ENCODE measurements at regions of chr2 and their contacts with region 1.

Region 1: GRCh38 chr2:103151046-103151445 is 389.2 kb downstream of the TMEM182 start:
- DNase-seq: no peak
- H3K4me3 ChIP-seq: no peak overlapping the region
- H3K27ac ChIP-seq: no peak overlapping the region
- H3K4me1 ChIP-seq: no peaks in the 10 kb centered on the region
- H3K27me3 ChIP-seq: no peaks in the 10 kb centered on the region
- CTCF ChIP-seq: no peak
- EP300 ChIP-seq: no peak
- POLR2A ChIP-seq: no peak
- RAD21 ChIP-seq: no peak

Region 2: DNA sequence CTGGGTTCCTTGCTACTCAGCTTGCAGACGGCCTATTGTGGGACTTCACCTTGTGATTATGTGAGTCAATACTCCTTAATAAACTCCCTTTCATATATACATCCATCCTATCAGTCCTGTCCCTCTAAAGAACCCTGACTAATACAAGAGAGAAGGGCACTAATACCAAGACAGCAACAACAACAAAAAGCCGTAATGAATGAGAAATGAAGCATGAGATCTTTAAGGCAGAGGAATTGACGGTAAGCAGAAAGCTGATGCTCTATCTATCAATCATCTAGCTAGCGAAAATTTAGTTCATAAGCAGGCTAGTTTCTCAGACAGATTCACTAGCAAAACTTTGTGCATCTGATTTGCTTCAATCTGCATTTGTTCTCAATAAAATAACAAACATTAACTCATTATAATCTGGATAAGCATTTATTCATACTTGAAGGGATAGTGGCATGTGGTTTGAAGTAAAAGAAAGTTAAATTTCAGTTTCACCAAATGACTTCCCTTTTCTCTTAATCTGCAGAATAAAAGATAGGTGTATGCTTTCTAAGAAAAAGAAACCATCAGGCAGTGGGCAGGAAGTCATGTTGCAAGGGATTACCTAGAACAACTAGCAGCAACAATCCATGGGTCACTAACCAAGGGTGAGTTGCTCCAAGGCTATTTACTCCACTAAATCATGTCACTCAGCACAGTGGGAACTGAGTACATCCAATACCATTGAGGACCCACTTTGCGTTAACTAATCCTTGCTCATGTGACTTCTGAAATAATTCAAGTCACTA is 12.7 kb before region 1 on chr2:
- CTCF ChIA-PET with region 1: no interaction called
- POLR2A ChIA-PET with region 1: no interaction called
- DNase-seq: no peak
- H3K4me3 ChIP-seq: no peak overlapping the region
- H3K27ac ChIP-seq: no peak overlapping the region
- H3K4me1 ChIP-seq: peaks cover 0 to 4% (median under 1%) of the 10 kb centered on the region in 4 experiments; a peak in 2 of 7 replicates
- H3K27me3 ChIP-seq: no peaks in the 10 kb centered on the region
- CTCF ChIP-seq: no peak
- EP300 ChIP-seq: no peak
- POLR2A ChIP-seq: no peak
- RAD21 ChIP-seq: no peak

Region 3: DNA sequence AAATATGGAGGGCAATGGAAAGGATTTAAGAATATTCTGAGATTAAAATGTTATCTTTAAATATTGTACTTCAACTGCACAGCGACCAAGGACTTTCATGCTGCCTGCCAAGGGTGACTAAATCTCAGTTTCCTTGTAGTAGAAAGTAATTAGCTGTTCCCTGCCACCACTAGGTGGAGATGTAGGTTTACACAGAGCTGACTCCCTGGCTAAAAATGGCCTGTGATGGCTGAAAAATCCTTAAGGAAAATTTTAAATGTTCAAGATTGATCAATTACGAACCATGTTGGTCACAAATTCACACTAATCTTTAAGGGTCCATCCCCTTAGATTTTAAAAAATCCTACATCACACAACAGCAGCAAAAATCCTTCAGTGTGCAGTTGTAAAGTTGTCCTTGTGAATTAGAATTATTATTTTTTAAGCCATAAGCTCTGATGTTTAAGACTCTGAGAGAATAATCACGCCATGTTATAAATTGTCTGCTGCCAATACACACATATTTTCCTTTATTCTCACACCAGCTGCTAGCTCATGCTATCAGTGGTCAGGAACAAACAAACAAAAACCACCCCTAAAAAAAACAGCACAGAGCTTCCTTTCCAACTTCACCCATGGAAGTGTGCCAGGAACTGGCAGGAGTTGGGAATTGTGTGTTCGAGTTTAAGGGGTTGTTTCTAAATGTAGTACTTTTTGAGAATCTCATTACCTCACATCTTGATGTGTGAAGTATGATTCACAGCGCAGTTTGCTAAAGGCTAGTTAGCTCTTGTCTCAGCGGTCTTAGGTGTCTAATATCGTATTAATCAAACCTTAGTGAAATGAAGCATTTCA is 10.6 kb after region 1 on chr2:
- CTCF ChIA-PET with region 1: interaction called, 14 read pairs
- POLR2A ChIA-PET with region 1: no interaction called
- DNase-seq: no peak
- H3K4me3 ChIP-seq: no peak overlapping the region
- H3K27ac ChIP-seq: no peak overlapping the region
- H3K4me1 ChIP-seq: peaks cover 0 to 2% (median 1%) of the 10 kb centered on the region in 4 experiments; a peak in 2 of 7 replicates
- H3K27me3 ChIP-seq: no peaks in the 10 kb centered on the region
- CTCF ChIP-seq: peak in 2 of 3 experiments; percentile 74 to 79; a peak in 3 of 4 replicates
- EP300 ChIP-seq: no peak
- POLR2A ChIP-seq: no peak
- RAD21 ChIP-seq: peak; percentile 92 to 95

Region 4: DNA sequence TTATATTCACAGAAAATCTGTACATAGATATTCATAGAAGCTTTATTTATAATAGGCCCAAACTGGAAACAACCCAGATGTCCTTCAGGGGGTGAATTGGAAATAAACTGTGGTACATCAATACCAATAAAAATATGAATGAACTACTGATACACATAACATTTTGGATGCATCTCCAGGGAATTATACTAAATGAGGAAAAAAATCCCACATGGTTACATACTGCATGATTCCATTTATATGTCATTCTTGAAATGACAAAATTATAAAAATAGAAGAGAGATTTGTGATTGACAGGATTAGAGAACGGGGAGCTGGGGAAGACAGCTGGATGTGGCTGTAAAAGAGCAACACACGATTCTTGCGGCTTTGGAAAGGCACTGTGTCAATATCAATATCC is 45.8 kb after region 1 on chr2:
- CTCF ChIA-PET with region 1: no interaction called
- POLR2A ChIA-PET with region 1: no interaction called
- DNase-seq: no peak
- H3K4me3 ChIP-seq: no peak overlapping the region
- H3K27ac ChIP-seq: no peak overlapping the region
- H3K4me1 ChIP-seq: no peaks in the 10 kb centered on the region
- H3K27me3 ChIP-seq: no peaks in the 10 kb centered on the region
- CTCF ChIP-seq: no peak
- EP300 ChIP-seq: no peak
- POLR2A ChIP-seq: no peak
- RAD21 ChIP-seq: no peak

Region 5: DNA sequence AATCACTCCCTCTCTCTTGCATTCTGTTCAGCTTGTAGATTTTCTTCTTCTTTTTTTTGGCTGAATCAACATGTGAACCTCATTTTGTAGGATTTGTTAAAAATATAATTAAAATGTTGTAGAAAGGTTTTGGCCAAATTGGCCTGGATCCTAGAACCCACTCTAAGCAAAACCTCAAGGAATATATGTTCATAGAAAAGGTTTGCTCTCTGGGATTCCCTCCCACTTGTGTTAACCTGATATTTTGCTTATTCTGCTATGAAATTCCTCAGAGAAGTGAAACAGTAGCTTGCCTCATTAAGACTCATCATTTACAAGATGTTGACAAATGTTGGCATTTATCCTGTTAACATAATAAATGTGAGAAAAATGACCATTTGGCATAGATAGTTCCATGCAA is 67.5 kb after region 1 on chr2:
- CTCF ChIA-PET with region 1: no interaction called
- POLR2A ChIA-PET with region 1: no interaction called
- DNase-seq: no peak
- H3K4me3 ChIP-seq: no peak overlapping the region
- H3K27ac ChIP-seq: no peak overlapping the region
- H3K4me1 ChIP-seq: 0 out of 7 replicates have a peak, but pooled peaks cover 0 to 3% (median 0%) of the 10 kb centered on the region in 4 experiments
- H3K27me3 ChIP-seq: no peaks in the 10 kb centered on the region
- CTCF ChIP-seq: no peak
- EP300 ChIP-seq: no peak
- POLR2A ChIP-seq: no peak
- RAD21 ChIP-seq: no peak